ENCODE measurements at regions of chr6 and their contacts with region 1.

Region 1: GRCh38 chr6:152828431-152828830 is 77.8 kb downstream of the VIP start:
- DNase-seq: no peak
- H3K4me3 ChIP-seq: no peak overlapping the region
- H3K27ac ChIP-seq: no peak overlapping the region
- H3K4me1 ChIP-seq: no peaks in the 10 kb centered on the region
- H3K27me3 ChIP-seq: no peaks in the 10 kb centered on the region
- CTCF ChIP-seq: no peak
- POLR2A ChIP-seq: no peak

Region 2: GRCh38 chr6:153272201-153272980 is 444.0 kb after region 1 on chr6:
- intact Hi-C with region 1: loop called (anchors 5 kb)
- DNase-seq: no peak
- H3K4me3 ChIP-seq: no peak overlapping the region
- H3K27ac ChIP-seq: no peak overlapping the region
- H3K4me1 ChIP-seq: no peaks in the 10 kb centered on the region
- H3K27me3 ChIP-seq: no peaks in the 10 kb centered on the region
- CTCF ChIP-seq: no peak
- POLR2A ChIP-seq: no peak

Measured in breast epithelium (tissue), 4 donors.